SK-N-SH (cell line): ENCODE measurements at regions of chr5 and their contacts with region 1.

Region 1: DNA sequence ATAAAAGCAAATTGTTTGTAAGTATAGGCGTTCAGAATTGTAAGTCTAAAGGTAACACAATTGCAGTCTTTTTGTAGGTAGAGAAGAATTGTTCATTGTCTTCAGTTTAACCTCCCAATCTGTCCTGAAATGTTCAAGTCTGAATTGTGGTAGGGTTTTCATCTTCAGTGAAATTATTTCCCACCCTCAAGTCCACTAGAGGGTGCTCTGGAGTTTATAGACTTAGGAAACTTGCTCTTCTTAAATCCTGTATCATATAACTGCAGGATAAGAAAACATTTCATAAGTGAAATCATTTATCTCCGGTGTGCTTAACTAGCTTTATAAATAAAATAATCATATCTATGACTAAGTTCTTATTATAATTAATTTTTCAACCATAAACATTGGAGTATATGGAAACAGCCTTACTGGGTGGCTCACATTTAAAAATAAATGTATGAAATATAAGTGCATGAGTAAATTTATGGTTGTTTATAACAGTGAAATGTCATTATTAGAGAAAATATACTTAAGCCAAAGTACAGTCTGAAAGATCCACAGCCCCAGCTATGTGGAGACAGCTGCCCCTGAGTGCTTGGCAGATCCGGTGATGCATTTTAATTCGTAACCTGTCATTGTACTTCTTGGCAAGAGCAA is 182.4 kb upstream of the OTULINL start:
- DNase-seq: peak; percentile 56
- H3K4me3 ChIP-seq: no peak overlapping the region; a peak in 1 of 4 replicates
- H3K27ac ChIP-seq: peak overlapping the region; percentile 89 to 96
- H3K4me1 ChIP-seq: peaks cover 53 to 55% of the 10 kb centered on the region in 2 experiments
- H3K27me3 ChIP-seq: no peaks in the 10 kb centered on the region
- CTCF ChIP-seq: peak; percentile 87
- EP300 ChIP-seq: no peak
- RAD21 ChIP-seq: peak; percentile 83

Region 2: GRCh38 chr5:14383923-14384322 is 15.2 kb before region 1 on chr5:
- CTCF ChIA-PET with region 1: interaction called, 54 read pairs
- POLR2A ChIA-PET with region 1: no interaction called
- DNase-seq: no peak
- H3K4me3 ChIP-seq: no peak overlapping the region
- H3K27ac ChIP-seq: no peak overlapping the region
- H3K4me1 ChIP-seq: peaks cover 0 to 13% of the 10 kb centered on the region in 2 experiments; a peak in 2 of 4 replicates
- H3K27me3 ChIP-seq: no peaks in the 10 kb centered on the region
- CTCF ChIP-seq: no peak
- EP300 ChIP-seq: no peak
- RAD21 ChIP-seq: no peak

Region 3: DNA sequence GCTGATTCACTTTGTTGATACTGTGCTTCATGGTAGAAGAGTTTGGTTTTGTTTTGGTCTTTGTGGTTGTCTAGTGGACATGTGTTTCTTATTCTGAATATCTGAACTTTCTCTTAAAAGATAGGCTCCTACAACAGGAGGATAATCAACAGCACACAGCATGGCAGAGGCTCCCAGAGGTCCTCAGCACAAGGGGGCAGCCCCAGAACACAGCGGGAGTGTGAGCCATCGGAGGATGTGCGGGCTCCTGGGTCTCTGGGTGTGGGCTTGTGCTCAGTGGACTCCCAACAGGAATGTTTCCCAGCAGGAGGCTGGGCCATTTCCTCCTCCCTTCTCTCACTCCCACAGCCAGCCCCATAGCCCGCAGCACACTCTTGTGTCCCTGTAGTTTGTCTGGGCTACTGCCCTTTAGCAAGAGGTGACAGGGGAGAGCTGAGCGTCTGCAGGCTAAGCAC is 18.1 kb after region 1 on chr5:
- CTCF ChIA-PET with region 1: interaction called, 20 read pairs
- POLR2A ChIA-PET with region 1: no interaction called
- DNase-seq: peak; percentile 88
- H3K4me3 ChIP-seq: no peak overlapping the region
- H3K27ac ChIP-seq: peak overlapping the region; percentile 98 to 100
- H3K4me1 ChIP-seq: peaks cover 63 to 81% of the 10 kb centered on the region in 2 experiments
- H3K27me3 ChIP-seq: no peaks in the 10 kb centered on the region
- CTCF ChIP-seq: peak; percentile 41
- EP300 ChIP-seq: peak; percentile 10 to 99; a peak in 2 of 4 replicates
- RAD21 ChIP-seq: peak; percentile 70

Region 4: GRCh38 chr5:14581333-14581890 is 182.2 kb after region 1 on chr5 and contains the start of gene OTULINL:
- CTCF ChIA-PET with region 1: interaction called, 21 read pairs
- POLR2A ChIA-PET with region 1: interaction called, 4 read pairs
- DNase-seq: peak; percentile 100
- H3K4me3 ChIP-seq: peak within 1 kb of the TSS; percentile 58 to 62
- H3K27ac ChIP-seq: peak within 1 kb of the TSS in 1 of 2 experiments; percentile 79; a peak in 2 of 4 replicates
- H3K4me1 ChIP-seq: peaks cover 0 to 16% of the 10 kb centered on the region in 2 experiments; a peak in 1 of 4 replicates
- H3K27me3 ChIP-seq: peaks cover 57% of the 10 kb centered on the region
- CTCF ChIP-seq: no peak
- EP300 ChIP-seq: no peak; a peak in 1 of 4 replicates
- RAD21 ChIP-seq: no peak
- polyA plus RNA-seq, gene OTULINL: 0.26 and 0.62 TPM in 2 replicates

Region 5: DNA sequence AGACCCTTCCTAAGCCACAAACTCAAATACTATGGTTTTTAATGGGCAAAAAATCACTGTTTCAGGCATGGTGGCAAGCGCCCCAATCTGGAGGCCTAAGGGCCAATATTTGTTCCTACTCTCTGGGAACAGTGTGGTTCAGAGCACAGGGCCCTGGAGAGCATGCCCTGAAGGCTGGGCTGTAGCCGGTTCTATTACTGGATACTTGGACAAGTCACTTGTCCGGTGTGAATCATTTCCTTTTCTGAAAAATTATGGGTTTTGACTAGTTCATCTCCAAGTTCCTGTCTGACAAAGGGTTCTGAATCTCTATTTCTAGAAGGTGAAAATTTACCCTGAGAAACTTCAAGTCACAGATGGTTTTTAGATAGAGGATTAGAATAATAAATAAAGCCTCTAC is 340.4 kb after region 1 on chr5:
- CTCF ChIA-PET with region 1: no interaction called
- POLR2A ChIA-PET with region 1: no interaction called
- DNase-seq: no peak
- H3K4me3 ChIP-seq: no peak overlapping the region
- H3K27ac ChIP-seq: peak overlapping the region in 1 of 2 experiments; percentile 73; a peak in 2 of 4 replicates
- H3K4me1 ChIP-seq: peaks cover 0 to 25% of the 10 kb centered on the region in 2 experiments; a peak in 2 of 4 replicates
- H3K27me3 ChIP-seq: no peaks in the 10 kb centered on the region
- CTCF ChIP-seq: no peak
- EP300 ChIP-seq: no peak
- RAD21 ChIP-seq: no peak